Astrocyte of the cerebellum (primary cell): ENCODE measurements at regions of chr9 and their contacts with region 1.

Region 1: DNA sequence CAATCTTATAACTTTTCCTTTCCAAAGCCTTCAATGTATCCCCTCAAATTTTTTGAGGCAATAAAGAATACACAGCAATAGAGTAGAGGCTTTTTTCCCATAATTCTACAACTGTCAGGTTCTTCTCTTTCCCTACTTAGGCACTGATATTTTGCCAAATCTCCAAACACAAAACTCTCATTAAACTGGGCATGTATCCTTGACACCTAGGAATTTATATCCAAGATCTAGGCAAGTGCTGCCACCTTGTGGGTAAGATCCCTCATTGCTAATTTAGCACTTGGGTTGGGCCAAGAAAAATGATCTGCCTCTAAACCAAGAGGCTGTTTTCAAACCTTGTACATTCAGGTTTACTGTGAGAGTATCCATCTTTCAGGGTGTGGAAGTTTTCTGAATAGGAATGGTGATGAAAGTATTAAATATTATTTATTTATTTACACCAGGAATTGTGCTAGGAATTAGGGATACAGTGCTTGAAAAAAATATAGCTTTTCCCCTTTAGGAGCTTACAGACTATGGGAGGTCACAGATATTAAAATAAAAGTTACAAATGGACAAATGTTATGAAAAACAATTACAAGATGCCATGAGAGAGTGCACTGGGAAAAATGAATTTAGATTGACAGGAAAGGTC is 17.6 kb downstream of the TSTD2 start:
- DNase-seq: peak; percentile 47
- H3K4me3 ChIP-seq: no peak overlapping the region
- CTCF ChIP-seq: peak; percentile 81

Region 2: GRCh38 chr9:97372580-97372979 is 243.0 kb before region 1 on chr9:
- in situ Hi-C with region 1: no loop called
- DNase-seq: no peak
- H3K4me3 ChIP-seq: no peak overlapping the region
- CTCF ChIP-seq: no peak

Region 3: DNA sequence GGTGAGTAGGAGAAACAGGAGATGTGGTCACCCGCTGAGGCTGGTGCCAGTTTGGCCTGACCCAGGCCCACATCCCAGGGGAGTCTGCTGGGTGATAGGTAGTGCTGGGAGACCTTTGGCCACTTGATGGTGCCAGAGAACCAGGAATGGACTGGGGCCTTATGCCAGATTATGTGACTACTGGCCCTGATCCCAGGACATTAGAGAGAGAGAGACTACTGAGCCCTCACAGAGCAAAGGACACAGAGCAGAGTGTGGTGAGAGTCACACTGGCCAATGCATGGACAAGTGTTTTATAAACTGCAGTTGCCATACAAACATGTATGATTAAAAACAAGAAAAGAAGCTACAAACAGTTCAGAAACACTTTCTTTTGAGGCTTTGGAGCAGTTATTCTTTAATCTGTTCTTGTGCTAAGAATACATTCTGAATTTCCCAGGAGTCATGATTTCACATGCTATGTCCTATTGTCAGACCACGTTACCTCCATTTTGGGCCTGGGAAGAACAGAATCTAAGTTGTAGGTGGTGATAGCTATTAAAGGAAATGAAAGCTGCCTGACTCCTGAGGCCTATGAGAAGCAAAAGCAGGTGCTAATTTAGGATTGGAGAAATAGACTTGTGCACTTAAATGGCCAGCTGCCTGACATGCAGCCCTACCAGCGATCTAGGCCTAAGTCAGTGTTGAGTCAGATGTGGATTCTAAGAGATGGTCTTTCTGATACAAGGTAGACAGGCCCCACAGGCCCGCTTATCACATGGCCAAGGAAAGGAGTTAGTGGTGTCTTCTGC is 146.7 kb before region 1 on chr9:
- in situ Hi-C with region 1: loop called (anchors 25 kb)
- DNase-seq: peak; percentile 41
- H3K4me3 ChIP-seq: no peak overlapping the region
- CTCF ChIP-seq: peak; percentile 81

Region 4: DNA sequence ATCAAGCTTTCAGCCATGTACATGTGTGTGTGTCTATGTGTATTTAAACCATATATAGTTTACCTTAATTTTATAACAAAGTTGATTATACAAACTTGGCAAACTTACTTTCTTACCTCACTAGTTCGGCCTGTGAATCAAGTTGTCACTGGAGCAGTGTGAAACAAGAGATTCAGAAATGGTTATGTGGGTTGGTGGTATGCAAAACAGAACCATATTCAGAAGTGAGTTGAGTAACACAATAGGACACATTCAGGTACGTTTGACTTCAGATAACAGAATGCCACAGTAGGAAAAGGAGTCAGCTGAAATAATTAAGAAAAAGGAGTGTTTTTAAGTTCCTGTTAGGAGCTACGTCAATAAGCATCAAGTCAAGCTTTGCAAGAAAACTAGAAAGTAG is 60.1 kb after region 1 on chr9:
- in situ Hi-C with region 1: no loop called
- DNase-seq: no peak
- H3K4me3 ChIP-seq: no peak overlapping the region
- CTCF ChIP-seq: no peak